Posterior vena cava (tissue), 2 donors: ENCODE measurements at regions of chr10 and their contacts with region 1.

Region 1: GRCh38 chr10:31759799-31760626 is 168.6 kb downstream of the ARHGAP12 start:
- DNase-seq: peak; percentile 98

Region 2: GRCh38 chr10:31707093-31708039 is 52.6 kb before region 1 on chr10:
- intact Hi-C with region 1: loop called in 1 of 2 experiments (anchors 10 kb)
- DNase-seq: peak; percentile 92